ENCODE measurements at regions of chr1 and their contacts with region 1.

Region 1: DNA sequence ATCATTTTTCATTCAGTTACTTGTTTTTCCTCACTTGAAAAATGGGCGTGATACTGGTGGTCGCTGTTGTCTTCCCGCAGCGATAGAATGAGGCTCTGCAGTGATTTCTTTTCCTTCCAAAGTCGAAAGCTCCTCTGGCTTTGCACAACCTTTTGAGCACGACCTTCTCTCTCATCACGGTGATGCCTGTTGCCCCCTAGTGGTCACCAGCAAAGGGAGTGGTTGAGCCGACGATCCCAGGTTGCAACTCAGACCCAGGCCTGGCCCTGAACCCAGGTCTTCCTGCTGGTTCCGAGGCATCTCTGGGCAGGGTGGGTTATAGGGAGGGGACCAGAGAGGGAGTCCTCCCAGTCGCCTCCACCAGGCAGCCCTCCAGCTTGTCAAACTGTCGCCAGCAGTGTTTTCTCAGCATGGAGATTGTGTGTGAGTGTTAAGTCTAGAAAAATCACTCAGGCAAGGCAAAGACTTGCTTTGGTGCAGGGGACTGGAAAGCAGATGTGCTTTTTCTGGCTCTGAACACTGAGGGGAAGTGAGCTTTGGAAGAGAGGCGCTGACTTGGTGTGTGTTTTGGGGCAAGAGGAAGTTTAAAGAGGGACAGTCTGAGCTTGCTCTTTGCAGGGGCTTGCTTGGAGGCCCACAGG is 285.3 kb downstream of the CAMTA1 start:
- DNase-seq: peak; percentile 80
- CTCF ChIP-seq: peak; percentile 93

Region 2: GRCh38 chr1:6795661-6796060 is 274.8 kb before region 1 on chr1:
- CTCF ChIA-PET with region 1: interaction called, 19 read pairs
- POLR2A ChIA-PET with region 1: no interaction called
- DNase-seq: no peak
- CTCF ChIP-seq: no peak

Region 3: DNA sequence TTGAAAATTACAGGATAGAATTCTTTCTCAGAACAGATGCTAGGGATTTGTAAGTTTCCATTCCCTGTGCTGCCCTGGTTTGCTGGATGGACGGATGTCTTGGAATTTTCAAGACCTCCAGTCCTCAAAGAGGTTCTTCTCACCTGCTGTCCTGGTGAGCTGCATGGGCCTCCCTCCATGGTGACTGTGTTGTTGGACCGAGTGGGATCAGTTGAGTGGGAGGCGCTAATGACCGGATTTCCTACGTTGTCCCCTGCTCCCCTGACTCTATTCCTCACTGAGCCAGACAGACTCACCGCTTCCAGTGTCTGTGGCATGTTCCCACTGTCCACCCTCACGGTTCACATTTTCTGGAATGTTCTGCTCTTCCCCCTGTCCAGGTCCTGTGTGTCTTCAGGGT is 55.5 kb before region 1 on chr1:
- CTCF ChIA-PET with region 1: no interaction called
- POLR2A ChIA-PET with region 1: no interaction called
- DNase-seq: no peak
- CTCF ChIP-seq: no peak

Region 4: DNA sequence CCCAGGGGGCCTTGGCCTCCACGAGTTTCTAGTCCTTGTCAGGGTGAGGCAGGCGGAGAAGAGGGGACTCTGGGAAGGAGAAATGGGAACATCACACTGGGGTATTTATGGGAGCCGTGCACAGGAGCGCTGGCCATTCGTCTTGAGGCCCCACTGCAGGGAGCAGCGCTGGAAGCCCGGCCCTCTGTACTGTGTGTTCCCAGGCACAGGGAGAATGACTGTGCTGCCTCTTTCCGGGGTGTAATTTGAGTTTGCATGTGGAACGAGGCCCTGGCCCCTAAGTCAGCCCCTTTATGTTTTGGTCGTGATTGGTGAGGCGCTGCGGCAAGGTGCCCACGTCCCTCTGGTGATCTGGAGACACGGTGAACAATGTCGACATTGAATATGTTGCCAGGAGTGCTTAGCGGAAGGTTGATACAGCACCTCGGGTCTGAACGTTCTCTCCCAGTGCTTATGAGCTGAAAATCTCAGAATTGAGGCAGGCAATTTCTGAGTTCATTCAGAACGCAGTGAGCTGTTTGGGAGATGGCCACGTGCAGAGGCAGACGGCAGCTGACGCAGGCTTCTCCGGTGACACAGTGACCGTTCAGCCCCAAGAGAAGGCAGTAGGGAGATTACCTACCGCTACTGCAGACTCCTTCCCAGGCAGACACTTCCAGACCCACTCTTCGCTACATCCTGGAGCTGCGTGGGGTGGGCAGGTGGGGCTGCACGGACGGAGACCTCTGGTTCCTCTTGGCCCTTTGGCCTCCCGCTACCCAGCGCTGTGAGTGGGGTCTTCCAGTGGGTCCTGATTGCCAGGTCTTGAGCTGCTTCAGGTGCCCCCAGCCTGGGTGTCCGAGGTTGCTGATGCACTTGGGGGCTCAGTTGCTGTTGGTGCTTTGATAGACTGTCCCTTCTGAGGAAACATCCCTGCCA is 19.5 kb before region 1 on chr1:
- CTCF ChIA-PET with region 1: interaction called, 17 read pairs
- POLR2A ChIA-PET with region 1: no interaction called
- DNase-seq: no peak
- CTCF ChIP-seq: no peak

Region 5: GRCh38 chr1:7084232-7084894 is 13.9 kb after region 1 on chr1:
- CTCF ChIA-PET with region 1: interaction called, 40 read pairs
- POLR2A ChIA-PET with region 1: no interaction called
- DNase-seq: no peak
- CTCF ChIP-seq: no peak

Region 6: GRCh38 chr1:7199077-7199779 is 128.7 kb after region 1 on chr1:
- CTCF ChIA-PET with region 1: no interaction called
- POLR2A ChIA-PET with region 1: no interaction called
- DNase-seq: no peak
- CTCF ChIP-seq: no peak